A673 (cell line): ENCODE measurements at regions of chr3 and their contacts with region 1.

Region 1: DNA sequence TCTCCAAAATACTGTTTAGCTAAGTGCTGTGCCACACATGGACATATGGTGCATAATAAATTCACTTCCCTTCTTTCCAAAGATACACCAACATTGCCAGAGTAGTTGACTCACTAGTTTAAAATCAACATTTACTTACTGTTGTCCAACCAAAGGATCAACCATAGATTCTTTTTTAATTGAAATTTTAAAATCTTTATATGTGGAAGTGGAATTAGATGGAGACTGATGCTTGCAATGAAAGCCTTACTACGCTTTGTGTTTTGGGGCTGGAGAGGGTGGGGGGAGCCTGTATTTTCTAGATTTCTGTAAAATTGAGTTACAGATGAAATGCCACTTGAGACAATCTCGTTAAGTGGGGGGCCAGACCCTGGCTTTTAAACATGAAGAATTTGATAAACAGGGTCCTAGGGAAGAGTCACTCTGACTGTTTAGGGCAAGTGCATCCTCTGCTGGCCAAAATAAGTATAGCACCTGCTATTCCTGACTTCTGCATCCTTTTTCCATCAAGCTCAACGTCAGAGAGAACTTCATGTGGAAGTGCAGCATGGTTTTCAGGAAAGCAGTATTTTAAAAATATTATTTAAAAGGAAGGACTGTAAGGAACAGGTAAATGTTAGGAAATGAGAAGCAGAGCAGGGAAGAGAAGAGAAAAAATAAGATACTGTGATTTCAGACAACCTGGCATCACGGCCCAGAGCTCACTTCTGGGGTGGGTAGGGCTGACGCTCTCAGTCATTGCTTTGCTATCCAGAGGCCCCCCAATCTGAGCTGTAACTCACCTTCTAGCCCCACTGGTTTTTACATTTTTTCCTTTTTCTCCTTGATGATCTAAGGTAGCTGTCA is 76.7 kb downstream of the BOC start:
- DNase-seq: peak; percentile 73
- H3K4me3 ChIP-seq: no peak overlapping the region
- H3K27ac ChIP-seq: no peak overlapping the region
- H3K4me1 ChIP-seq: peaks cover 10% of the 10 kb centered on the region
- H3K27me3 ChIP-seq: no peaks in the 10 kb centered on the region
- CTCF ChIP-seq: peak; percentile 96

Region 2: DNA sequence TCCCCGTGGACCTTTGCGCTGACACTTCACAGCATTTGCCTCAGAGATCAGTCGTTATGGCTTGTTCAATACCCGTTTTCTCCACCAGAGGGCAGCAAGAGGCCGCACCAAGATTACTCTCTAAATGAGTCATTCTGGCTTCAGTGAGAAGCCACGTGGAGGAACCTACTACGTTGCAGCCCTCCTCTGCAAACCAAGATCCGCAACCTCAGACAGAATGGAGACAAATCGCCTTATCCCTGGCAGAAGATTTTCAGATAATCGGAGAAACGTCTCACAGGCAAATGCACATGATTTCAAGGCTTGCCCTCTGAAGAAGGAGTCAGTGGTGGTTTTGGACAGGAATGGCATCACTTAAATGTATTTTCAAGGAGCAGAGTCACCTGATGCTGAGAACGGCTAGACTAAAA is 236.7 kb before region 1 on chr3:
- CTCF ChIA-PET with region 1: interaction called, 7 read pairs
- POLR2A ChIA-PET with region 1: no interaction called
- intact Hi-C with region 1: loop called (anchors 1 kb)
- DNase-seq: peak; percentile 87
- H3K4me3 ChIP-seq: no peak overlapping the region
- H3K27ac ChIP-seq: no peak overlapping the region
- H3K4me1 ChIP-seq: peaks cover 22% of the 10 kb centered on the region
- H3K27me3 ChIP-seq: peaks cover 15% of the 10 kb centered on the region
- CTCF ChIP-seq: peak; percentile 86

Region 3: GRCh38 chr3:113136071-113136470 is 152.0 kb before region 1 on chr3:
- CTCF ChIA-PET with region 1: interaction called, 15 read pairs
- POLR2A ChIA-PET with region 1: no interaction called
- intact Hi-C with region 1: loop called (anchors 1 kb)
- DNase-seq: peak; percentile 51
- H3K4me3 ChIP-seq: no peak overlapping the region
- H3K27ac ChIP-seq: no peak overlapping the region
- H3K4me1 ChIP-seq: no peaks in the 10 kb centered on the region
- H3K27me3 ChIP-seq: no peaks in the 10 kb centered on the region
- CTCF ChIP-seq: peak; percentile 66

Region 4: DNA sequence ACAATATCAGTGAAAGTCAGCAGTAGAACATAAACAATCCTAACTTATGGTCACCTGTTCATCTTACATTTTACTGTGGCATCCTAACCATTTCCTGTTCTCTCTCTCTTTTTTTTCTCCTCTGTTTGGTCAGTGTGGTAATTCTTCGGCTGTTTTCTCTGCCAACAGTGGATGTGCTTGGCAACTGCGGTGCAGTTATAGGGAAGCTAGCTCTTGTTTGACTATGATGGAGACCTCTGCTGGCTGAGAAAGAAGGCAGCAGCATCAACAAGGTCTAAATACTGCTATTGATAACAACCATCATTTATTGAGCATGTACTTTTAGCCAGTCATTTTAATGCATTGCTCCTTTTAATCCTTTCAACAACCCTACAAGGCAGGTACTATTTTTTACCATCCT is 891.5 kb after region 1 on chr3:
- CTCF ChIA-PET with region 1: no interaction called
- POLR2A ChIA-PET with region 1: no interaction called
- intact Hi-C with region 1: no loop called
- DNase-seq: peak; percentile 28
- H3K4me3 ChIP-seq: no peak overlapping the region
- H3K27ac ChIP-seq: no peak overlapping the region
- H3K4me1 ChIP-seq: no peaks in the 10 kb centered on the region
- H3K27me3 ChIP-seq: peaks cover 31% of the 10 kb centered on the region
- CTCF ChIP-seq: peak; percentile 48